HEK293 (cell line): ENCODE measurements at regions of chr9 and their contacts with region 1.

Region 1: DNA sequence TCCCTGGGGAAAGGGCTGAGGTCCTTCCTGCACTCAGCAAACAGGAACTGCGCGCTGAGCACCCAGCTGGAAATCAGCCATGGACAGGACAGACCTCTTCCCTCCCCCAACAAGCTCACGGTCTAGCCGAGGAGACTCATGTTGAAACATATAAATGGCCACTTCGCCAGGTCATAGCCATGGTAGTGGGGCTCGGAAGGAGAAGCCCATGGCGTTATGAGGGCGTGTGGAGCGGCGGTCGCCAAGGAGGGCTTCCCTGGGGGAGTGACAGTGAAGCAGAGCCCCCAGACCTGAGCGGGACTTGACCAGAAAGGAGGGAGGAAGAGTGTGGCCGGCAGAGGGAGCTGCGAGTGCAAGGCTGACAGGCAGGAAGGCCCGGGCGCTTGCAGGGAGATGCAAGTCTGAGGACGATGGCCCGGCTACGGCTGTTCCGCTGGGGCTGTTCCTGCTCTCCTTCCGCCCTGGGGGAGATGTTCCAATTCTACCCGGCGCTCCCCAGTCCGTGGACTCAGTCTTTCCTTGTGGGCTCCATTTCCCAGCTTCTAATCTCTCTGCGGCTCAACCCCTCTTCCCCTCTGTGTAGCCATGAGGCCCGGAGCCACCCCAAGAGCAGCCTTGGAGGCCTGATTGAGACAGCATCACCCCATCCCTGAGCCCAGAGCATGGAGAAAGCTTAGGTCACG is 43.9 kb upstream of the PRRC2B start:
- H3K4me3 ChIP-seq: peak overlapping the region; percentile 29
- H3K27ac ChIP-seq: no peak overlapping the region
- H3K4me1 ChIP-seq: no peaks in the 10 kb centered on the region
- CTCF ChIP-seq: peak; percentile 96

Region 2: GRCh38 chr9:131013771-131014676 is 336.0 kb before region 1 on chr9:
- CTCF ChIA-PET with region 1: no interaction called
- POLR2A ChIA-PET with region 1: no interaction called
- H3K4me3 ChIP-seq: no peak overlapping the region
- H3K27ac ChIP-seq: no peak overlapping the region
- H3K4me1 ChIP-seq: no peaks in the 10 kb centered on the region
- CTCF ChIP-seq: no peak

Region 3: DNA sequence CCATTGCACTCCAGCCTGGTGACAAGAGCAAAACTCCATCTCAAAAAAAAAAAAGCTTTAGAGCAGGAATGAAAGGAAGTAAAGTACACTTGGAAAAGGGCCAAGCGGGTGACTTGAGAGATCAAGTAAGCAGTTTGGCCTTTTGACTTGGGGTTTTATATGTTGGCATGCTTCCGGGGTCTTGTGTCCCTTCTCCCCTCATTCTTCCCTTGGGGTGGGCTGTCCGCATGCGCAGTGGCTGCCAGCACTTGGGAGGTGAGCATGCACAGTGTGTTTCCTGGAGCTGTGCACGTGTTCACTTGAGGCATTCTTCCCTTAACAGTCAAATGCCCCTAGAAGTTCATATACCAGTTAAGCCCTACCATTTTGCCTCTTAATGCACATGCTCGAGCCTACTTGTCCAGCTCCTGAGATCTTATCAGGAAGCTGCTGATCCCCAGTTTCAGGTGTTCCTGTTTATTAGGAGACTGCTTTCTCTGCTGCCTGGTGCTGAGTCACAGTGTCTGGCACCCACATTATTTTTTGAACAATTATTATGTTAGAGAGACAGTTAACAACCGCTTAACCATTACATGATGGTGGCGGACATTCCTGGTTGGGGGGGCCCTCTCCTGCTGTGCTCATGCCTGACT is 11.3 kb after region 1 on chr9:
- CTCF ChIA-PET with region 1: interaction called, 26 read pairs
- POLR2A ChIA-PET with region 1: no interaction called
- H3K4me3 ChIP-seq: no peak overlapping the region
- H3K27ac ChIP-seq: no peak overlapping the region
- H3K4me1 ChIP-seq: no peaks in the 10 kb centered on the region
- CTCF ChIP-seq: no peak

Region 4: DNA sequence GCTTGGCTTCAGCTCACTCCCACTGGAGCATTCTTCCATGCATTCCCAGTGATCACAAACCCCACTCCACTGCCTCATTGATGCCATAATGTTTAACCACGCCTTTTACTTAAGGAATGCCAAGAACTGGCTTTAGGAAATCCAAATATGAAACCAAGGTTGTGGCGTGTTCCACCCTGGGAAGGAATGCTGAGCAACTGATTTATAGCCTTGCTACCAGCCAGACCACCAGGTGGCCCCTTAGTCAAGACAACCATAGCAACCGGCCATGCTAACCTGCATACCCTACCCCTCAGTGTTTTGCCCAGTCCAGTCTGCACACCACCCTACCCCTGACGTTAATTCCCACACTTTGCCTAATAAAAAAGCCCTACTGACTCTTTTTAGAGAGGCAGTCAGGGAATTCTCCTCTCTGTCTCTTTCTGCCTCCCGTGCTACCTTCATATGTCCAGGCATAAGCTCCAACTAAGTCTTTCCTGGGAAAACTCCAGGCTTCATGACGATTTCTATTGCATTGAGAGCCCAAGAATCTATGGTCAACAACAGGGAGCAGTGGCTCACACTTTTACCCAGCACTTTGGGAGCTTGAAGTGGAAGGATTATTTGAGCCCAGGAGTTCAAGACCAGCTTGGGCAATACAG is 16.9 kb after region 1 on chr9:
- CTCF ChIA-PET with region 1: interaction called, 33 read pairs
- POLR2A ChIA-PET with region 1: interaction called, 36 read pairs
- H3K4me3 ChIP-seq: no peak overlapping the region
- H3K27ac ChIP-seq: no peak overlapping the region
- H3K4me1 ChIP-seq: 0 out of 2 replicates have a peak, but pooled peaks cover 2% of the 10 kb centered on the region
- CTCF ChIP-seq: peak; percentile 75

Region 5: GRCh38 chr9:131407717-131408195 is 57.7 kb after region 1 on chr9:
- CTCF ChIA-PET with region 1: interaction called, 23 read pairs
- POLR2A ChIA-PET with region 1: no interaction called
- H3K4me3 ChIP-seq: no peak overlapping the region
- H3K27ac ChIP-seq: peak overlapping the region; percentile 47
- H3K4me1 ChIP-seq: peaks cover 66% of the 10 kb centered on the region
- CTCF ChIP-seq: peak; percentile 62; the same call in 1 of the 2 replicates

Region 6: GRCh38 chr9:131443666-131444065 is 93.6 kb after region 1 on chr9:
- CTCF ChIA-PET with region 1: interaction called, 10 read pairs
- POLR2A ChIA-PET with region 1: interaction called, 4 read pairs
- H3K4me3 ChIP-seq: no peak overlapping the region
- H3K27ac ChIP-seq: no peak overlapping the region
- H3K4me1 ChIP-seq: no peaks in the 10 kb centered on the region
- CTCF ChIP-seq: no peak

Region 7: DNA sequence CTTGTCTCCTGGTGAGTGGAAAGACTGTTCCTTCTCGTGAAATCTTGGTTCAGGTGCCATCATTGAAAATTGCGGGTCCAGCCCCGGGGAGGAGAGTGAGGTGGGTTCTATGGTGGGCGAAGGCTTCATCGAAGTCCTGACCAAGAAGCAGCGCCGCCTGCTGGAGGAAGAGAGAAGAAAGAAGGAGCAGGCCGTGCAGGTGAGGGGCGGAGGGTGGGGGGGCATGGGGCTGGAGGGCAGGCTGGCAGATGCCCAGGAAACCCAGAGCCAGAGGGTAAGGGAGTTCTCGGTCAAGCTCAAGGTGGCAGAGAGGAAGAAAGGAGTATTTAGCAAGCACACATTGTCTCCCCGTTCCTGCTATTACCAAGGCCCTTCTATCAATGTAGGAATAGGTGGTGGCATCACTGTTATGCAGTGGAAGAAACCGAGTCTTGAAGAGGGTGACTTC is 128.4 kb after region 1 on chr9:
- CTCF ChIA-PET with region 1: interaction called, 26 read pairs
- POLR2A ChIA-PET with region 1: interaction called, 3 read pairs
- H3K4me3 ChIP-seq: no peak overlapping the region
- H3K27ac ChIP-seq: no peak overlapping the region
- H3K4me1 ChIP-seq: no peaks in the 10 kb centered on the region
- CTCF ChIP-seq: 0 out of 2 replicates have a peak, but pooled peaks have one; percentile 16

Region 8: GRCh38 chr9:131500939-131501541 is 151.0 kb after region 1 on chr9:
- CTCF ChIA-PET with region 1: interaction called, 10 read pairs
- POLR2A ChIA-PET with region 1: no interaction called
- H3K4me3 ChIP-seq: no peak overlapping the region
- H3K27ac ChIP-seq: peak overlapping the region; percentile 43; the same call in 1 of the 2 replicates
- H3K4me1 ChIP-seq: peaks cover 6% of the 10 kb centered on the region; the same call in 1 of the 2 replicates
- CTCF ChIP-seq: no peak